ENCODE measurements at regions of chr11 and their contacts with region 1.

Region 1: GRCh38 chr11:17219016-17219415 is 11.2 kb upstream of the PIK3C2A start:
- DNase-seq: no peak
- H3K4me3 ChIP-seq: no peak overlapping the region
- H3K27ac ChIP-seq: no peak overlapping the region
- H3K4me1 ChIP-seq: 0 out of 2 replicates have a peak, but pooled peaks cover 4% of the 10 kb centered on the region
- H3K27me3 ChIP-seq: no peaks in the 10 kb centered on the region
- CTCF ChIP-seq: no peak

Region 2: GRCh38 chr11:17185938-17186337 is 33.1 kb before region 1 on chr11:
- CTCF ChIA-PET with region 1: no interaction called
- POLR2A ChIA-PET with region 1: interaction called, 20 read pairs
- intact Hi-C with region 1: no loop called
- DNase-seq: no peak
- H3K4me3 ChIP-seq: no peak overlapping the region
- H3K27ac ChIP-seq: no peak overlapping the region
- H3K4me1 ChIP-seq: no peaks in the 10 kb centered on the region
- H3K27me3 ChIP-seq: no peaks in the 10 kb centered on the region
- CTCF ChIP-seq: no peak